ENCODE measurements at regions of chr9 and their contacts with region 1.

Region 1: GRCh38 chr9:105901514-105902109 is 207.3 kb downstream of the TMEM38B start:
- DNase-seq: no peak

Region 2: DNA sequence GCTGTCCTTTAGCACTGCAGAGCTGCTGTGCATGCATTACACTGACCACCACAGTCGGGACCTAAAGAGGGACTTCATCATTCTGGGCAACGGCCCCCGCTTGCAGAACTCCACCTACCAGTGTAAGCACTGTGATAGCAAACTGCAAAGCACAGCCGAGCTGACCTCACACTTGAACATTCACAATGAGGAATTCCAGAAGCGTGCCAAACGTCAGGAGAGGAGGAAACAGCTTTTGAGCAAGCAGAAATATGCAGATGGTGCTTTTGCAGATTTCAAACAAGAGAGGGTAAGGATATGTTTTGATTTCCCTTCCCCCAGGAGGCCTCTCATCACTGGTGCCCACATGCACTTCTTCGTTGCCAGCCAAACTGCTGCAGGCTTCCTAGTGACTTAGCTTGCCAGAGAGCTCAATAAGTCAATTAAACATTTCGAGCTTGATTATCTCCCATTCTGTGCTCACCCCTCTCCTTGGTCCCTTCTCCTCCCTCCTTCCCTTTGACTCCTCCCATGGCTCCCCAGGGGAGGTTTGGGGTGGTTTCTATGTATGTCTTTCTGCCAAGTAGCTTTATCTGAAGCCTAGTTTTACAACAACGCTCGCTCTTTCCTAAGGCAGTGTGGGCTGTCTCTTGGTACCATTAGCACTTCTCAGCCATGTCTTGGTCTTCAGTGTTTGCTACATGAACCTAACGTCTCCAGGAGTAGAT is 1028.0 kb after region 1 on chr9:
- intact Hi-C with region 1: loop called (anchors 10 kb)
- DNase-seq: no peak